Activated CD4-positive, alpha-beta T cell treated with anti-CD3 and anti-CD28 coated beads for 36 hours (primary cell): ENCODE measurements at regions of chr9 and their contacts with region 1.

Region 1: DNA sequence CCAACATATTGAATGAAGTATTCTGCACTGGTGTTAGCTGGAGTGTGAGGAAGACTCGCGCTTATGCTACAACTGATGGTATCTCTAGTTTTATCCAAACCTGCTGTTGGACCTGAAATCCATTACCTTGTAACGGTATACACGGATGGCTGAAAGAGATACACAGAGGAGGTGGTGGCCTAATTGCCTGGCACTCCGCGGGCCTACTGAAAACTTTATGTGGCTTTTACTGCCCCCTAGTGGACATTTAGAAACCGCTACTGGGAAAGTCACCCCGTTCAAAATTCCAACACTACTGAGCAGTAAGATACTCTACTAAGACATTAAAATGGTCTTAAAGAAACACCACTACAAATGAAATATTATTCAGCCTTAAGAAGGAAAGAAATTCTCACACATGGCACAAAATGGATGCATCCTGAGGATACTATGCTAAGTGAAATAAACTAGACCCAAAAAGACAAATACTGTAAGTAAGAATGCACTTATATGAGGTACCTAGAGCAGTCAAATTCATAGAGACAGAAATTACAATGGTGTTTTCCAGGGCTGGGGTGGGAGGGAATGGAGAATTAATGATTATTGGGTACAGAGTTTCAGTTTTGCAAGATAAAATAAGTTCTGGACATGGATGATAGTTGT is 100.4 kb downstream of the TTLL11 start:
- DNase-seq: peak; percentile 62
- ATAC-seq: peak; percentile 85
- H3K4me3 Mint-ChIP-seq: no peak overlapping the region
- H3K27ac Mint-ChIP-seq: no peak overlapping the region
- H3K4me1 Mint-ChIP-seq: no peaks in the 10 kb centered on the region
- H3K27me3 Mint-ChIP-seq: no peaks in the 10 kb centered on the region

Region 2: GRCh38 chr9:121545875-121546423 is 446.7 kb before region 1 on chr9:
- CTCF ChIA-PET with region 1: interaction called, 6 read pairs
- POLR2A ChIA-PET with region 1: no interaction called
- intact Hi-C with region 1: loop called (anchors 1 to 2 kb)
- DNase-seq: peak; percentile 86
- ATAC-seq: peak; percentile 89
- H3K4me3 Mint-ChIP-seq: no peak overlapping the region
- H3K27ac Mint-ChIP-seq: no peak overlapping the region
- H3K4me1 Mint-ChIP-seq: peaks cover under 1% of the 10 kb centered on the region
- H3K27me3 Mint-ChIP-seq: peaks cover 17% of the 10 kb centered on the region

Region 3: DNA sequence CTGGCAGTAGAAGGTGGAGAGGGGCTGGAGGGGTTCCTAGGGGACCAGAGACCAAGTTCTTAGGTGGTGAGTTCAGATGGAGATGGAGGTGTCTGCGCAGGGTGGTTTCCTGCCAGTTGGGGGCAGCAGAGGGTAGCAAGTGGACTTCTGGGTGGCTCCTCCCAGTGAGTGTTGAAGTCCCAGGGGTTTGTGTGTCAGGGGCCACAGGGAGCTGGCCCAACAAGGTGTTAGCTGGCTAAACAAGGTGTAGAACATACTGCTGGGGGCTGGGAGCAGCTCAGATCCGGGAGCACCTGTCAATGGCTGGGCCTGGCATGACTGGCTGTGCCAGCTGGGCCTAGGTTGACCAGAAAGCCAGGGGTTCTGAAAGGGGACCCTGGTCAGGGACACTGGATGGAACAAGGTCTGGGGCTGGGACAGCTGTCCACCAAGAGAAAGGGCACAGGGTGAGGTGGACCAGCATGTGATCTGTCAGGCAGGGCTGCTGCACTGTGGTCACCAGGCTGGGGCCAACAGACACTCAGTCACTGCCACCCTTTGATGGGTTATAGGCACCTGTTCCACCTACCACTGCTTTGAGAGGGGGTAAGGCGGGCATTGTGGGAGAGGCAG is 305.7 kb before region 1 on chr9:
- CTCF ChIA-PET with region 1: interaction called, 9 read pairs
- POLR2A ChIA-PET with region 1: no interaction called
- intact Hi-C with region 1: loop called (anchors 1 to 2 kb)
- DNase-seq: peak; percentile 84
- ATAC-seq: peak; percentile 88
- H3K4me3 Mint-ChIP-seq: no peak overlapping the region
- H3K27ac Mint-ChIP-seq: no peak overlapping the region
- H3K4me1 Mint-ChIP-seq: no peaks in the 10 kb centered on the region
- H3K27me3 Mint-ChIP-seq: peaks cover 5% of the 10 kb centered on the region

Region 4: DNA sequence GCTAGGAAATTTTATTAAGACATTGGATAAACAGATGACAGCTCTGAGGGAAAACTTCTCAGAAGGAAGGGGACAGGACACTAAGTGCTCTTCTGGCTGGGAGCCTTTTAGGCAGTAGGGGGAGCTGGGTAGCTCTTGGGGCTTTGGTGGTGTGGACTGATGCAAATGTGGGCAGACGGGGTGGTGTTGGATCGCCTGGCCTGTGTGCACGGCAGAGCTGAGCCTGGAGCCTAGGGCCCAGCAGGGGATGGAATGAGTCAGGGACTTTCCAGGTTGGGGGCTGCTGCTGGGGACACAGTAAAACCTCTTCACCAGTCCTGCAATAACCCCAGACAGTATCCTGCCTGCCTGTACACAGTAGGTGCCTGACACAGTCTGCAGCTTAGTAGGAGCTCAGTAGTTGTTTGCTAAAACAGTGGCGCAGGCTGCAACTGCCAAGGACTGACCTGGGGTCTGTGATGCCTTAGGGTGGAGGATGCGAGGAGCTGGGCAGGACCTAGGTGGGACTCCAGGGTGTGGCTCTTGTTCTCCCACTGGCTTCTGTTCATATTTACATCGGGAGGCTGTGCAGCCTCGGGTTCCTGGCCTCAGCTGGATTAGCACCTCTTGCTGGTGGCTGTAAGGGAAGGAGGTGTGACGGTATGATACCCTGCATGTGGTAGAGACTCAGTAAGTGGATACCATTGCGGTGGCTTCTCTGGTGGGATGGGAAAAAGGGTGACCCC is 257.5 kb before region 1 on chr9:
- CTCF ChIA-PET with region 1: no interaction called
- POLR2A ChIA-PET with region 1: no interaction called
- intact Hi-C with region 1: loop called in 1 of 2 experiments (anchors 2 kb)
- DNase-seq: peak; percentile 37
- ATAC-seq: peak; percentile 65
- H3K4me3 Mint-ChIP-seq: no peak overlapping the region
- H3K27ac Mint-ChIP-seq: no peak overlapping the region
- H3K4me1 Mint-ChIP-seq: peaks cover 6% of the 10 kb centered on the region
- H3K27me3 Mint-ChIP-seq: peaks cover 21% of the 10 kb centered on the region

Region 5: GRCh38 chr9:121837113-121837961 is 155.4 kb before region 1 on chr9:
- CTCF ChIA-PET with region 1: no interaction called
- POLR2A ChIA-PET with region 1: no interaction called
- intact Hi-C with region 1: loop called in 1 of 2 experiments (anchors 10 kb)
- DNase-seq: no peak
- ATAC-seq: no peak
- H3K4me3 Mint-ChIP-seq: no peak overlapping the region
- H3K27ac Mint-ChIP-seq: no peak overlapping the region
- H3K4me1 Mint-ChIP-seq: peaks cover 13% of the 10 kb centered on the region
- H3K27me3 Mint-ChIP-seq: no peaks in the 10 kb centered on the region